ENCODE measurements at regions of chr19 and their contacts with region 1.

Region 1: GRCh38 chr19:15466851-15467733 is 2.7 kb upstream of the RASAL3 start:
- DNase-seq: peak; percentile 69
- H3K4me3 Mint-ChIP-seq: peak overlapping the region; percentile 43
- H3K27ac Mint-ChIP-seq: peak overlapping the region; percentile 85
- H3K4me1 Mint-ChIP-seq: peaks cover 49% of the 10 kb centered on the region
- H3K27me3 Mint-ChIP-seq: peaks cover 14% of the 10 kb centered on the region

Region 2: DNA sequence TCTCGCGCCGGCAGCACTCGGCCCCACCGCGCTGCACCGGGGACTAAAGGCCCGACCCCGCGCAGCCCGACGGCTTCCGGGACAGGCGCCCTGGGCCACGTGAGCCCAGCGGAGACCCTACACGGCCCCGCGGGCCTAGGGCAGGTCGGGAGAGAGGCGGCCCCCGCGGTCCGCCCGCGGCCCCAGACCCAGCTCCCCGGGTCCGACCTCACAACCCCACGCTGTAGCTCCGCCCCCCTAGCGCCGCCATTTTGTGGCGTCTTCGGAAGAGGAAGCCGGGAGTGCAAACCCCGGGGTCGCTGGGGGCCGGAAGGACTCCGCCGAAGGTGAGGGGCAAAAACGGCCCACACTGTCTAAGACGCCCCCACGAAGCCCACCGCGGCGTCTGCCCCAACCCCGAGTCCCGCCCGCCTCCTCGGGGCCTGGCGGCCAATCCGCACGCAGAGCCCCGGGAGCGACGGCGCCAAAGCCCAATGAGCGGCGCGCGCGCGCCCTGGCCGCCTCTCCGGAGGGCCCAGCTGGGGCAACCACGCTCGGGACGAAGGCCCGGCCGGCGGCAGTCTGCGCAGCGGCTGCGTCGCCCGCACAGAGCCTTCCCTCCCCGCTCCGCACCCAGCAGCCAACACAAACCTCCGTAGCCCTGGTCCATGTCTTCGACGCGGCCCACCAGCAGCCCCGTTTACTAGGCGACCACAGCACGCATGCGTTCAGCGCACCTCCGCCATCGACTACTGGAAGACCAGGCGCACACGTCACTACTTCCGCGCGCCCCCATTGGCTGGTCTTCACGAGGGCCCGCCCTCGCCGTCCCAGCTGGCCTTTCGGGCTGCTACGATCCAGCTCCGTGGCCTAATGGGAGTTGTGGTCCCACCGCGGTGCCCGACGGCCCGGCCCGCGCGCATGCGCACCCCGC is 87.8 kb before region 1 on chr19 and contains the start of gene AKAP8:
- intact Hi-C with region 1: loop called (anchors 2 kb)
- DNase-seq: peak; percentile 98
- H3K4me3 Mint-ChIP-seq: peak within 1 kb of the TSS; percentile 98
- H3K27ac Mint-ChIP-seq: peak within 1 kb of the TSS; percentile 100
- H3K4me1 Mint-ChIP-seq: peaks cover 30% of the 10 kb centered on the region
- H3K27me3 Mint-ChIP-seq: no peaks in the 10 kb centered on the region
- total RNA-seq, gene AKAP8: 56.0 and 62.1 TPM in 2 replicates

Region 3: GRCh38 chr19:15418588-15419412 is 48.3 kb before region 1 on chr19 and contains the start of gene AKAP8L:
- intact Hi-C with region 1: loop called (anchors 1 kb)
- DNase-seq: peak; percentile 99
- H3K4me3 Mint-ChIP-seq: peak within 1 kb of the TSS; percentile 99
- H3K27ac Mint-ChIP-seq: peak within 1 kb of the TSS; percentile 99
- H3K4me1 Mint-ChIP-seq: peaks cover 33% of the 10 kb centered on the region
- H3K27me3 Mint-ChIP-seq: no peaks in the 10 kb centered on the region
- total RNA-seq, gene AKAP8L: 76.6 and 87.4 TPM in 2 replicates

Region 4: GRCh38 chr19:15432629-15433518 is 34.2 kb before region 1 on chr19:
- intact Hi-C with region 1: loop called (anchors 1 kb)
- DNase-seq: peak; percentile 94
- H3K4me3 Mint-ChIP-seq: peak overlapping the region; percentile 97
- H3K27ac Mint-ChIP-seq: peak overlapping the region; percentile 93
- H3K4me1 Mint-ChIP-seq: peaks cover 21% of the 10 kb centered on the region
- H3K27me3 Mint-ChIP-seq: no peaks in the 10 kb centered on the region

Region 5: GRCh38 chr19:15511671-15512424 is 44.8 kb after region 1 on chr19:
- intact Hi-C with region 1: loop called (anchors 1 kb)
- DNase-seq: no peak
- H3K4me3 Mint-ChIP-seq: no peak overlapping the region
- H3K27ac Mint-ChIP-seq: no peak overlapping the region
- H3K4me1 Mint-ChIP-seq: peaks cover 22% of the 10 kb centered on the region
- H3K27me3 Mint-ChIP-seq: peaks cover 30% of the 10 kb centered on the region

Region 6: GRCh38 chr19:15532779-15533521 is 65.9 kb after region 1 on chr19:
- intact Hi-C with region 1: loop called (anchors 1 kb)
- DNase-seq: no peak
- H3K4me3 Mint-ChIP-seq: no peak overlapping the region
- H3K27ac Mint-ChIP-seq: peak overlapping the region; percentile 58
- H3K4me1 Mint-ChIP-seq: peaks cover 26% of the 10 kb centered on the region
- H3K27me3 Mint-ChIP-seq: peaks cover 6% of the 10 kb centered on the region

Measured in activated T-helper 2 cell treated with anti-CD3 and anti-CD28 coated beads, Interferon-gamma antibody, Interleukin-2, Interleukin-4, amounts not matched to agents 10 μg/mL and 5 μg/mL and 100 μg/mL, durations not matched to agents 14 hours and 24 hours and 36 hours (primary cell).